Naive thymus-derived CD4-positive, alpha-beta T cell (primary cell): ENCODE measurements at regions of chr1 and their contacts with region 1.

Region 1: GRCh38 chr1:3530926-3531818 is 76.7 kb downstream of the ARHGEF16 start:
- DNase-seq: peak; percentile 52 to 86 (median 81)
- ATAC-seq: peak; percentile 89
- H3K4me3 ChIP-seq: peak overlapping the region; percentile 90
- H3K4me3 Mint-ChIP-seq: peak overlapping the region; percentile 81 to 97 (median 86)
- H3K27ac ChIP-seq: peak overlapping the region; percentile 68
- H3K27ac Mint-ChIP-seq: peak overlapping the region; percentile 82 to 99 (median 95)
- H3K4me1 ChIP-seq: peaks cover 9 to 12% of the 10 kb centered on the region in 2 donors
- H3K4me1 Mint-ChIP-seq: peaks cover 9 to 26% (median 23%) of the 10 kb centered on the region in 7 donors
- H3K27me3 ChIP-seq: no peaks in the 10 kb centered on the region
- H3K27me3 Mint-ChIP-seq: no peaks in the 10 kb centered on the region

Region 2: GRCh38 chr1:3491291-3492246 is 39.6 kb before region 1 on chr1:
- CTCF ChIA-PET with region 1: interaction called, 3 read pairs
- POLR2A ChIA-PET with region 1: no interaction called
- intact Hi-C with region 1: loop called in 1 of 2 experiments (anchors 2 kb)
- DNase-seq: peak; percentile 65 to 90 (median 83)
- ATAC-seq: peak; percentile 96
- H3K4me3 ChIP-seq: no peak overlapping the region
- H3K4me3 Mint-ChIP-seq: peak overlapping the region in 7 of 10 donors; percentile 26 to 76 (median 62)
- H3K27ac ChIP-seq: no peak overlapping the region
- H3K27ac Mint-ChIP-seq: peak overlapping the region in 2 of 9 donors; percentile 28 to 38
- H3K4me1 ChIP-seq: no peaks in the 10 kb centered on the region
- H3K4me1 Mint-ChIP-seq: peaks cover 2 to 7% (median 5%) of the 10 kb centered on the region in 7 donors
- H3K27me3 ChIP-seq: no peaks in the 10 kb centered on the region
- H3K27me3 Mint-ChIP-seq: no peaks in the 10 kb centered on the region

Region 3: DNA sequence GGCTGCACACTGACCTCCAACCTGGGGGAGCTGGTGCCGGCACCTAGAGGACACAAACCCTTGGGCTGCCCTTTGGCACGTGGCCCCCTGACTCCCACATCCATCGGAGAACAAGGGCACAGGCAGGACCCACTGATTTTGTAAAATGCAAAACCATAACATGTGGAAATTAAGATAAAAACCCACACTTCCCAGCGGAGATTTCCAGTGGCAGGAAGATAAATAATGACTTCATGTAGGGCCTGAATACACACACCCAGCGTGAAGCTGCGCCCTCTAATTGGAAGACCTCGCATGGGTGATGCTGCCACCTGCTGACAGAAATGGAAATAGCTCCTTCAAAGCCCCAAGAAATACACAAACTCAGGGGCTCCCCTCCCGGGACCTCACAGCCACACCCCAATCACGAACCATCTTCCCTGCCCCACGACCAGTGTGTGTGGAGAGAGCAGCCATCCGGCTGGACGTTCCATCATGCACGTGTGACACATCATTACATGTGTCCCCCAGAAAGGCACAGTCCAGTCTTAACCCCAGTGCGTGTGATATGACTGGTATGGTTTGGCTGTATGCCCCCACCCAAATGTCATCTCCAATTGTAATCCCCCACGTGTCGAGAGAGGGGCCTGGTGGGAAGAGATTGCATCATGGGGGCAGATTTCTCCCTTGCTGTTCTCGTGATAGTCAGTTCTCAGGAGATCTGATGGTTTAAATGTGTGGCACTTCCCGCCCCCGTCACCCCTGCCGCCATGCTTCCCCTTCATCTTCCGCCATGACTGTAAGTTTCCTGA is 87.9 kb after region 1 on chr1:
- CTCF ChIA-PET with region 1: interaction called, 10 read pairs
- POLR2A ChIA-PET with region 1: interaction called, 7 read pairs
- intact Hi-C with region 1: loop called (anchors 1 kb)
- DNase-seq: peak; percentile 47 to 82 (median 75)
- ATAC-seq: peak; percentile 96
- H3K4me3 ChIP-seq: no peak overlapping the region
- H3K4me3 Mint-ChIP-seq: peak overlapping the region in 2 of 10 donors; percentile 17 to 37
- H3K27ac ChIP-seq: no peak overlapping the region
- H3K27ac Mint-ChIP-seq: peak overlapping the region in 2 of 9 donors; percentile 1 to 59
- H3K4me1 ChIP-seq: peaks cover 11 to 15% of the 10 kb centered on the region in 2 donors
- H3K4me1 Mint-ChIP-seq: peaks cover 19 to 46% (median 34%) of the 10 kb centered on the region in 7 donors
- H3K27me3 ChIP-seq: no peaks in the 10 kb centered on the region
- H3K27me3 Mint-ChIP-seq: peaks cover 0 to 14% (median 6%) of the 10 kb centered on the region in 5 donors

Region 4: GRCh38 chr1:3746830-3747521 is 215.8 kb after region 1 on chr1:
- CTCF ChIA-PET with region 1: no interaction called
- POLR2A ChIA-PET with region 1: no interaction called
- intact Hi-C with region 1: loop called in 1 of 2 experiments (anchors 1 kb)
- DNase-seq: peak; percentile 76 to 91 (median 86)
- ATAC-seq: peak; percentile 99
- H3K4me3 ChIP-seq: peak overlapping the region; percentile 52
- H3K4me3 Mint-ChIP-seq: peak overlapping the region; percentile 72 to 87 (median 78)
- H3K27ac ChIP-seq: peak overlapping the region; percentile 71
- H3K27ac Mint-ChIP-seq: peak overlapping the region in 4 of 9 donors; percentile 65 to 88 (median 73)
- H3K4me1 ChIP-seq: peaks cover 7 to 12% of the 10 kb centered on the region in 2 donors
- H3K4me1 Mint-ChIP-seq: peaks cover 15 to 40% (median 33%) of the 10 kb centered on the region in 7 donors
- H3K27me3 ChIP-seq: no peaks in the 10 kb centered on the region
- H3K27me3 Mint-ChIP-seq: peaks cover 0 to 4% (median 0%) of the 10 kb centered on the region in 5 donors

Region 5: GRCh38 chr1:3856908-3857790 is 326.0 kb after region 1 on chr1 and contains the starts of genes CEP104 and DFFB:
- CTCF ChIA-PET with region 1: no interaction called
- POLR2A ChIA-PET with region 1: no interaction called
- intact Hi-C with region 1: loop called in 1 of 2 experiments (anchors 5 kb)
- DNase-seq: peak; percentile 98 to 99 (median 98)
- ATAC-seq: peak; percentile 98
- H3K4me3 ChIP-seq: peak within 1 kb of the TSS; percentile 98
- H3K4me3 Mint-ChIP-seq: peak within 1 kb of the TSS; percentile 93 to 99 (median 98)
- H3K27ac ChIP-seq: peak within 1 kb of the TSS; percentile 79
- H3K27ac Mint-ChIP-seq: peak within 1 kb of the TSS; percentile 88 to 97 (median 94)
- H3K4me1 ChIP-seq: peaks cover 17 to 25% of the 10 kb centered on the region in 2 donors
- H3K4me1 Mint-ChIP-seq: peaks cover 15 to 58% (median 41%) of the 10 kb centered on the region in 7 donors
- H3K27me3 ChIP-seq: no peaks in the 10 kb centered on the region
- H3K27me3 Mint-ChIP-seq: no peaks in the 10 kb centered on the region
- total RNA-seq, gene CEP104: 33.7 to 68.0 (median 45.6) TPM
- total RNA-seq, gene DFFB: 13.6 to 27.7 (median 19.2) TPM